Activated T-helper 1 cell treated with anti-CD3 and anti-CD28 coated beads, Interleukin-12 subunit alpha, Interleukin-12 subunit beta, Interleukin-2, Interleukin-4 antibody, amounts not matched to agents 30 ng/mL and 10 ng/mL and 1 ng/mL, durations not matched to agents 14 hours and 24 hours and 36 hours (primary cell): ENCODE measurements at regions of chr10 and their contacts with region 1.

Region 1: DNA sequence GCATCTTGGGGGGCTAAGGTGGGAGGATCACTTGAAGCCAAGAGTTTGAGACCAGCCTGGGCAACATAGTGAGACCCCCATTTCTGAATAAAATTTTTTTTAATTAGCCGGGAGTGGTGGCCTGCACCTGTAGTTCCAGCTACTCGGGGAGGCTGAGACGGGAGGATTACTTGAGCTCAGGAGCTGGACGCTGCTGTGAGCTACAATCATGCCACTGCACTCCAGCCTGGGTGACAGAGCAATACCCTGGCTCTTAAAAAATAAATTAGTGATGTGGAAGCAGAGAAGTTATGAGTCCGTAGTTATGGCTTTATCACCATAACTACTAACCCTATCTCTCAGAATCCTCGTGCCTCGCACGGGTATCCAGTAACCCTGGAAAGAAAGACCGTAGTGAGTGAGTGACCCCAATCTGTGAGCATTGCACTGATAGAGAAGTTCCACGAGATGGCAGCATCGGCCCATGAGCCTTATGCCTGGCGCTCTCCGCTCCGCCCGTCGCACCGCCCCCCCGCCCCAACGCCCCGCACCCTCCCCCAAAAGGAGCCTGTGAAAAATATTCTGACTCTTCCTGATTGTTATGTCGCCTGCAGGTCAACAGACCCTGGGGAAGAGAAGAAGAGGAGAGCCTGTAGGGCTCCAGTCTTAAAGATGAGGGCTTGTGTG is 4.9 kb upstream of the SLC29A3 start:
- DNase-seq: peak; percentile 23
- H3K4me3 Mint-ChIP-seq: no peak overlapping the region
- H3K27ac Mint-ChIP-seq: no peak overlapping the region
- H3K4me1 Mint-ChIP-seq: peaks cover 23% of the 10 kb centered on the region
- H3K27me3 Mint-ChIP-seq: peaks cover 7% of the 10 kb centered on the region

Region 2: GRCh38 chr10:71569775-71570588 is 255.8 kb after region 1 on chr10:
- intact Hi-C with region 1: loop called (anchors 1 kb)
- DNase-seq: peak; percentile 63
- H3K4me3 Mint-ChIP-seq: no peak overlapping the region
- H3K27ac Mint-ChIP-seq: peak overlapping the region; percentile 55
- H3K4me1 Mint-ChIP-seq: no peaks in the 10 kb centered on the region
- H3K27me3 Mint-ChIP-seq: no peaks in the 10 kb centered on the region

Region 3: GRCh38 chr10:71696628-71697326 is 382.6 kb after region 1 on chr10:
- intact Hi-C with region 1: loop called (anchors 1 kb)
- DNase-seq: peak; percentile 41
- H3K4me3 Mint-ChIP-seq: no peak overlapping the region
- H3K27ac Mint-ChIP-seq: no peak overlapping the region
- H3K4me1 Mint-ChIP-seq: peaks cover 53% of the 10 kb centered on the region
- H3K27me3 Mint-ChIP-seq: no peaks in the 10 kb centered on the region

Region 4: GRCh38 chr10:71812016-71812912 is 498.1 kb after region 1 on chr10:
- intact Hi-C with region 1: loop called (anchors 1 kb)
- DNase-seq: peak; percentile 54
- H3K4me3 Mint-ChIP-seq: no peak overlapping the region
- H3K27ac Mint-ChIP-seq: no peak overlapping the region
- H3K4me1 Mint-ChIP-seq: no peaks in the 10 kb centered on the region
- H3K27me3 Mint-ChIP-seq: no peaks in the 10 kb centered on the region

Region 5: DNA sequence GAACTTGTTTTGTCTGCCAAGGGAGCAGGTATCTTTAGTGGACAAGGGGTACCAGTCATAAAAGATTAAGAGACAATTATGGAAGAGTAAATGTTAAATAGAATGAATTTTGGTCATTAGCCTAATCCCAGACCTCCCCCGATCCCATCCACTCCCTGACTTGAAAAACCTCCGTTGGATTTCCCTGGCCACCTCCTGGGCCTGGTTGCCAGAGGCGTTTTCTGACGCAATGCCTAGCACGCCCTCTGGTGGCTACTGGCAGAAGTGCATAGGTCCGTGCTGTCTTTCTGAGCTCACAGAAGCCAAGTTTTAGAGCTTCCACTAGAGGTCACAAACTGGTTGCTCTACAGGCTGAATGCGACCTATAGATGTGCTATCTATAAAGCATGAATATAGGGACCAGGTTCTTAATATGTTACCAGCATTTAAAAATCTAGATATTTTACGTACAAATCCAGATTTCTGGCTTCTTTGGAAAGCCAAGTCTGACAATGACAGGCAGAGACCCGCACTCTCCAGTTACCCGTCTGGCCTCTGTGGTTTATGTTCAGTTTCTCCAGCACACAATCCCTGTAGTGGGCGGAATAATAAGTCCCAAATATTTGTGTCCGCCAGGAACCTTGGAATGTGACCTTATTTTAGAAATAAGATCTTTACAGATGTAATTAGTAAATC is 734.4 kb after region 1 on chr10:
- intact Hi-C with region 1: loop called (anchors 1 kb)
- DNase-seq: peak; percentile 75
- H3K4me3 Mint-ChIP-seq: no peak overlapping the region
- H3K27ac Mint-ChIP-seq: peak overlapping the region; percentile 0
- H3K4me1 Mint-ChIP-seq: peaks cover 12% of the 10 kb centered on the region
- H3K27me3 Mint-ChIP-seq: peaks cover 3% of the 10 kb centered on the region